ENCODE measurements at regions of chr2 and their contacts with region 1.

Region 1: GRCh38 chr2:207746131-207746530 is 23.6 kb downstream of the FZD5 start:
- DNase-seq: peak; percentile 85
- H3K4me3 ChIP-seq: no peak overlapping the region
- H3K27ac ChIP-seq: no peak overlapping the region
- H3K4me1 ChIP-seq: no peaks in the 10 kb centered on the region
- H3K27me3 ChIP-seq: no peaks in the 10 kb centered on the region

Region 2: GRCh38 chr2:206856513-206856912 is 889.6 kb before region 1 on chr2:
- in situ Hi-C with region 1: no loop called
- DNase-seq: peak; percentile 72
- H3K4me3 ChIP-seq: no peak overlapping the region
- H3K27ac ChIP-seq: no peak overlapping the region
- H3K4me1 ChIP-seq: peaks cover 15% of the 10 kb centered on the region
- H3K27me3 ChIP-seq: no peaks in the 10 kb centered on the region

Region 3: GRCh38 chr2:208033758-208034502 is 287.8 kb after region 1 on chr2:
- in situ Hi-C with region 1: loop called (anchors 10 kb)
- DNase-seq: peak; percentile 33
- H3K4me3 ChIP-seq: no peak overlapping the region
- H3K27ac ChIP-seq: no peak overlapping the region
- H3K4me1 ChIP-seq: no peaks in the 10 kb centered on the region; the same call in 1 of the 2 replicates
- H3K27me3 ChIP-seq: no peaks in the 10 kb centered on the region

Region 4: GRCh38 chr2:208062113-208062512 is 316.0 kb after region 1 on chr2:
- in situ Hi-C with region 1: loop called (anchors 10 kb)
- DNase-seq: peak; percentile 56
- H3K4me3 ChIP-seq: no peak overlapping the region
- H3K27ac ChIP-seq: no peak overlapping the region
- H3K4me1 ChIP-seq: no peaks in the 10 kb centered on the region
- H3K27me3 ChIP-seq: no peaks in the 10 kb centered on the region

Measured in GM23248 (cell line).